AG04449 (cell line): ENCODE measurements at regions of chr16 and their contacts with region 1.

Region 1: GRCh38 chr16:30844671-30845449 is 49.0 kb downstream of the BCL7C start:
- DNase-seq: peak; percentile 53
- H3K4me3 ChIP-seq: peak overlapping the region; percentile 18; the same call in 1 of the 2 replicates
- CTCF ChIP-seq: peak; percentile 83

Region 2: GRCh38 chr16:30805370-30806169 is 39.3 kb before region 1 on chr16:
- CTCF ChIA-PET with region 1: interaction called, 10 read pairs
- POLR2A ChIA-PET with region 1: no interaction called
- DNase-seq: no peak
- H3K4me3 ChIP-seq: peak overlapping the region; percentile 77
- CTCF ChIP-seq: peak; percentile 38

Region 3: DNA sequence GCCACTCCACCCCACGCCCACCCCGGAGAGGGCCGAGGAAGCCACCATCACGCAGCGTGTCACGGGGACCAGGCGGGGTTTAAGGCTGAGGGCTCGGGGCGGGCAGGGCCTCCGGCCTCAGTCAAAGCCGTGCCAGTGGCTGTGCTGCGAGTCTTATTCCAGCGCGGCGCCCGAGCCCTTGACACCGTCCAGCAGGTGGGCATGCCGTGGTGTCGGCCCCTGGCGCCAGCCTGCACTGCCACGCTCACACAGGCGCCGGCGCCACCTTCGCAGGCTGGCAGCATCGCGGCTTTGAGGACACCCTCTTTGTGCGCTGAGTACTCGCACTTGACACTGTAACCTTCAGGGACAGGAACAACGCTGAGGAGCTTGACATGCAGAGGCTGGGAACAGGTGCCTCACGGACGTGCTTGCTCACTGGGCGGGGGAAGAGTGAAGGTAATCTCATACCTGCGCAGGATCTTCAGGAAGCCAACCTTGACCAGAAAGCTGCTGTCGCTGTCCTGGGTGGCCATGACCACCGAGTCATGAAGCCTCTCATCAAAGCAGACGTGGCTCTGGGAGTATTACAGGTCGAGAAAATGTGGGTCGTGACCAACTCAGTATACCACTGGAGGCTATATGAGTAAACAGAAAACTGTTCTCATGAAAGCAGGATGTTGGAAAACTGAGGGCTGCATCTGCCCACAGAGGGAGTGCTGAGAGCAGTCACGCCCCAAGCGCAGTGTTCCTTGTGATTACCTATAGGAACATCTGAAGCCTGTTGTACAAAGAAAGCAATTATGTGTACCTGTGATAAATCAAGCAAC is 23.7 kb before region 1 on chr16:
- CTCF ChIA-PET with region 1: interaction called, 22 read pairs
- POLR2A ChIA-PET with region 1: interaction called, 3 read pairs
- DNase-seq: no peak
- H3K4me3 ChIP-seq: no peak overlapping the region
- CTCF ChIP-seq: no peak

Region 4: GRCh38 chr16:30874821-30875717 is 30.2 kb after region 1 on chr16:
- CTCF ChIA-PET with region 1: interaction called, 35 read pairs
- POLR2A ChIA-PET with region 1: interaction called, 3 read pairs
- DNase-seq: no peak
- H3K4me3 ChIP-seq: peak overlapping the region; percentile 93
- CTCF ChIP-seq: no peak

Region 5: GRCh38 chr16:30922960-30923535 is 78.2 kb after region 1 on chr16:
- CTCF ChIA-PET with region 1: interaction called, 77 read pairs
- POLR2A ChIA-PET with region 1: no interaction called
- DNase-seq: peak; percentile 94
- H3K4me3 ChIP-seq: peak overlapping the region; percentile 93
- CTCF ChIP-seq: no peak

Region 6: GRCh38 chr16:30964574-30965226 is 119.8 kb after region 1 on chr16:
- CTCF ChIA-PET with region 1: no interaction called
- POLR2A ChIA-PET with region 1: no interaction called
- DNase-seq: no peak
- H3K4me3 ChIP-seq: no peak overlapping the region
- CTCF ChIP-seq: no peak

Region 7: GRCh38 chr16:30984669-30985400 is 140.0 kb after region 1 on chr16 and contains the start of gene HSD3B7:
- CTCF ChIA-PET with region 1: no interaction called
- POLR2A ChIA-PET with region 1: no interaction called
- DNase-seq: no peak
- H3K4me3 ChIP-seq: peak within 1 kb of the TSS; percentile 57
- CTCF ChIP-seq: peak; percentile 94